ENCODE measurements at regions of chr15 and their contacts with region 1.

Region 1: DNA sequence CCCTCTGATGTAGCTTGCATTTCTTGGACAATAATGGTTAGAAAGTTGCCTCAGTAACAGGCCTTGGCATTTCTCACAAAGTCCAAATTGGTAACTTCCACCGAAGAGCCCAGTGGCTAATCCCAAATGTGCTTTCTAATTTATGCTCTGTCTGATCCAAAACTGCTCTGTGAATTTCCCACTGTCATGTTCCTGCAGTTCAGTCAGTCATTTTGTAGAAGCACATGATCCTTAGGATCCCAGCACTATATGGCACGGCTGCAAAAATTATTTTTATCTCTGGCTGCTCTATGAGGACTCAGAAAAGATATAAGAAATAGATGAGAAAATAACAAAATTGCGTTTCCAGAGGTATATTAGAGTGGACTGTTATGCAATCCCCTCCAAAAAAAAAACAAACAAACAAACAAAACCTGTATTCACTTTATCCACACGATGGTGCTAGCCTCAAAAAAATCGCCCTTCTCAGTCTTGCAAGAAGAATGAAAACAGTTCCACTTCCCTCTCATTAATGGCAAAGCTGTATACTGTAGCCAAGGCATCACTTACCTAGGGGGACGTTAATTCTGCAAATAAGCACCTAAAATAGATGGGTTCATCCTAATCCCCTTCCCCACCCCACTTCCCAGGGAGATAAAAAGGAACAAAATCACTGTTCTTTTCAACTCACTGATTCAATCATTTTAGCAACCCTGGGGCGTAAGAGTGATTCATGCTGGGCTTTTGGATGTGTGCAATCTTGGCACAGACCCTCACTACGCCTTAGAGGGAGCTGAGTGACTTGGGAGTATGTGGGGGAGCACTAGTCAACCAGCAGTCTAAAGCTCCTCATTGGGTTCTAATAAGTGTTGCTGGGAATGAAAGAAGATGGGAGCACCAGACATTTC is 61.3 kb downstream of the TMCO5A start:
- DNase-seq: peak in 1 of 3 donors; percentile 48
- ATAC-seq: peak; percentile 53
- H3K4me3 ChIP-seq: no peak overlapping the region
- H3K4me1 ChIP-seq: no peaks in the 10 kb centered on the region
- CTCF ChIP-seq: no peak

Region 2: GRCh38 chr15:38129531-38130204 is 134.0 kb after region 1 on chr15:
- intact Hi-C with region 1: no loop called
- DNase-seq: peak; percentile 35 to 64 (median 49)
- ATAC-seq: peak; percentile 42
- H3K4me3 ChIP-seq: no peak overlapping the region
- H3K4me1 ChIP-seq: peaks cover 19% of the 10 kb centered on the region
- CTCF ChIP-seq: no peak

Region 3: DNA sequence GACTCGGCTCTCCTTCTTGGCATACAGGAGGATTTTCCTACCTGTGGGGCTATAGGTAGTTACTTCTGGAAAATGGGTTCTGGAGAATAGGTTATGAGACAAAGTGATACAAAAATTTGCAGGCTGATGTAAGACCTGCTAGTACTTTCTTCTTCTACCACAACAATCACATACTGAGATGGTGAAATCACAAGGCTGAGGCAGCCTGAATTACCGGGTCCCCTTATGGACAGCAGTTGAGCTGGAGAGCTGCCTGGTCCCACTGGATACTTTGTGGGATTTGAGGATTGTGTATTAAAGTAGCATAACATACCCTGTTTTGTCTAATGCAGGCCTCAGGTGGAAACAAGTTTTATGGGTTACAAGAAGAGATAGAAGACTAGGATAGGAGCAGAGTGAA is 371.8 kb after region 1 on chr15:
- intact Hi-C with region 1: loop called in 1 of 2 experiments (anchors 10 kb)
- DNase-seq: no peak
- ATAC-seq: no peak
- H3K4me3 ChIP-seq: no peak overlapping the region
- H3K4me1 ChIP-seq: no peaks in the 10 kb centered on the region
- CTCF ChIP-seq: no peak